ENCODE measurements at regions of chr14 and their contacts with region 1.

Region 1: DNA sequence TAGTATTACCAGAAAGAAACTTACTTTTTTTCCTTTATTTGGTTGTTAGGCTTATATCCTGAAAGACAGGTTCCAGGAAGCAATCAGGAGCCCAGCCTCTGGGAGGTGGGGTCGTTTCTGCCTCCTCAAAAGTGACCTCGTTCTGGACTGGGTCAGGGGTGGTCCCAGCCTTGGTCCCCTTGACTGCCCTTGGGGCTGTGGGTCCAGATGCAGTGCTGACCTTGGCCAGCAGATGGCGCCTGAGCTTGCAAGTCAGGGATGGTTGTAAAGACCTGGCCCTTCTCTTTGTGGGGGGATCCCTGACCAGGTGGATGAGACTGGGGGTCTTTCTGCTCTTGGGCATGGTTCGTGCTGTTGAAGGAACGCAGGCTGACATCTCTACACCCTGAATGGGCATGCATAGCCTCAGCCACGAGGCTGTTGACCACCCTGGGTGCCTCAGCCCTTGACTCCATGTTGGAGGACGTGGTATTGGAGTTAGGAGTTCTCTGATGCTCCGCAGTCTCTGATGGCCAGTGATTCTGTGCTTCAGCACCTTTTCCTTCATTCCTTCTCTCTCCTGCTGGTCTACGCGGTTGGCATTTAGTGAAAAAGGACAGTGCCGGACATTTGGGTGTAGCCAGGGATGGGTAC is 62.4 kb downstream of the ADCK1 start:
- DNase-seq: peak; percentile 66 to 79
- ATAC-seq: peak; percentile 68 to 94; a peak in 5 of 6 replicates
- H3K4me3 ChIP-seq: no peak overlapping the region
- H3K27ac ChIP-seq: no peak overlapping the region
- H3K4me1 ChIP-seq: no peaks in the 10 kb centered on the region
- CTCF ChIP-seq: peak; percentile 82
- EP300 ChIP-seq: no peak
- POLR2A ChIP-seq: no peak
- RAD21 ChIP-seq: peak; percentile 82 to 83

Region 2: GRCh38 chr14:77832297-77832696 is 30.0 kb before region 1 on chr14:
- CTCF ChIA-PET with region 1: interaction called, 17 read pairs
- POLR2A ChIA-PET with region 1: no interaction called
- DNase-seq: no peak
- ATAC-seq: no peak
- H3K4me3 ChIP-seq: no peak overlapping the region
- H3K27ac ChIP-seq: no peak overlapping the region
- H3K4me1 ChIP-seq: no peaks in the 10 kb centered on the region
- CTCF ChIP-seq: no peak
- EP300 ChIP-seq: no peak
- POLR2A ChIP-seq: no peak
- RAD21 ChIP-seq: no peak

Region 3: DNA sequence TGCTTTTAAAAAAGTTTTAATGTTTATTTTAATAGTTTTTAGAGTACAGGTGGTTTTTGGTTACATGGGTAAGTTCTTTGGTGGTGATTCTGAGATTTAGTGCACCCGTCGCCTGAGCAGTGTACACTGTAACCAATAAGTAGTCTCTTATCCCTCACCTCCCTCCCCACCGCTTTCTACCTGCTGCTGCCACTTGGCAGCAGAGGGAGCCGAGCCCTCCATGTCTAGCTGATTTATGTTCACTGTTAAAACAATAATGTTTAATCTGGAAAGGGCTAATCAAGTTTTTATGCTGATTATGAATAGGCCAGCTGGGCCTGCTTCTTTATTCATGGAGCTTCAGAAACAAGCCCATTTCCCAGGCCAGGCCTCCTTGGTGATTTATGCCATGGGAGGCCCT is 10.7 kb after region 1 on chr14:
- CTCF ChIA-PET with region 1: interaction called, 27 read pairs
- POLR2A ChIA-PET with region 1: no interaction called
- DNase-seq: no peak
- ATAC-seq: no peak
- H3K4me3 ChIP-seq: no peak overlapping the region
- H3K27ac ChIP-seq: no peak overlapping the region
- H3K4me1 ChIP-seq: no peaks in the 10 kb centered on the region
- CTCF ChIP-seq: no peak
- EP300 ChIP-seq: no peak
- POLR2A ChIP-seq: no peak
- RAD21 ChIP-seq: no peak

Region 4: DNA sequence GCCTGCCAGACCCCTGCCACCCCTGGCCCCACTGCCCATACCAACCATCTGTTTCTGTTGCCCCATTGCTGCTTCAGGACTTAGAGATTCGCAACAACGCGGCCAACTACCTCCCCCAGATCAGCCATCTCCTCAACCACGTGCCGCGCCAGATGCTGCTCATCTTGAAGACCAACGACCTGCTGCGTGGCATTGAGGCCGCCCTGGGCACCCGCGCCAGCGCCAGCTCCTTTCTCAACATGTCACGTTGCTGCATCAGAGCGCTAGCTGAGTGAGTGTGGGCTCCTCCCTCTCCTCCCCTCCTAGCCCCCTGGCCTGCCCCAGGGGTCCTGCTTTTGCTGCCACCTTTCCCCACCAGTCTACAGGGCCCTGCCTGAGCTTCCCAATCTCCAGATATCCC is 69.2 kb after region 1 on chr14:
- CTCF ChIA-PET with region 1: no interaction called
- POLR2A ChIA-PET with region 1: no interaction called
- DNase-seq: no peak
- ATAC-seq: no peak
- H3K4me3 ChIP-seq: no peak overlapping the region
- H3K27ac ChIP-seq: no peak overlapping the region
- H3K4me1 ChIP-seq: no peaks in the 10 kb centered on the region
- CTCF ChIP-seq: no peak
- EP300 ChIP-seq: no peak
- POLR2A ChIP-seq: no peak
- RAD21 ChIP-seq: no peak

Region 5: DNA sequence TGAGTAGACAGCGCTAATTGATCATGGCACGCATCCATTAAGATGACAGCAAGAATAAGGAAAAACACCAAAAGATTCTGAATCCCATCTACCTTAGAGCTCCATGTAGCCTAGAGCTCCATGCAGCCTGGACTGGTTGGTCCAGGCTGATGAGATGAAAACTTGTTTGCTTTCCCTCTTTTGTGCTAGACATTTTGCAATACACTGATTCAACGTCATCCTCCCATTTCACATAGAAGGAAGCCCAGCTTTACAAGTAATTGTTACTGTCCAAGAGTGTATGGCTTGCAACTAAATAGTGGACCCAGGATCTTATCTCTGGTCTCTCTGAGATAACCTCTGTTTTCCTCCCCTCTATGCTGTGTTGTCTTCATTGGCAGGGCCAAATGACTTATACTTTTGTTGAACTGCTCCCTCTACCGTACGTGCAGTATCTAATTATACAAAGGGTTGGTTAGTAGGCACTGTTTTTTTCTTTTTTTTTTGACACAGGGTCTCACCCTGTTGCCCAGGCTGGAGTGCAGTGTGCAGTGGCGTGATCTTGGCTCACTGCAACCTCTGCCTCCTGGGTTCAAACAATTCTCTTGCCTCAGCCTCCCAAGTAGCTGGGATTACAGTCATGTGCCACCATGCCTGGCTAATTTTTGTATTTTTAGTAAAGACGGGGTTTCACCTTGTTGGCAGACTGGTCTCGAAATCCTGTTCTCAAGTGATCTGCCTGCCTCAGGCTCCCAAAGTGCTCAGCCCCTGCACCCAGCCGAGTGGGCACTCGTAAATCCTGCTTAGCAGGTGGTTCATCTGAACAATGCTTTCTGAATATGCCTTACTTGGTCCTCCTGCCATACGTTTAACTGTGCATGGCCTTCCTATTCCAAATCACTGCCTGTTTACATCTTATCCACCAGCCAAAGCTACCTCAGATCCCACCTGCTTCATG is 99.6 kb after region 1 on chr14:
- CTCF ChIA-PET with region 1: no interaction called
- POLR2A ChIA-PET with region 1: no interaction called
- DNase-seq: peak in 1 of 2 experiments; percentile 29
- ATAC-seq: peak; percentile 37 to 53; a peak in 3 of 6 replicates
- H3K4me3 ChIP-seq: no peak overlapping the region
- H3K27ac ChIP-seq: no peak overlapping the region
- H3K4me1 ChIP-seq: no peaks in the 10 kb centered on the region
- CTCF ChIP-seq: no peak
- EP300 ChIP-seq: no peak
- POLR2A ChIP-seq: no peak
- RAD21 ChIP-seq: peak in 1 of 2 experiments; percentile 21; a peak in 1 of 5 replicates

Region 6: GRCh38 chr14:77980475-77981321 is 118.4 kb after region 1 on chr14:
- CTCF ChIA-PET with region 1: no interaction called
- POLR2A ChIA-PET with region 1: no interaction called
- DNase-seq: no peak
- ATAC-seq: peak; percentile 25 to 63; a peak in 4 of 6 replicates
- H3K4me3 ChIP-seq: peak overlapping the region; percentile 43
- H3K27ac ChIP-seq: peak overlapping the region in 1 of 2 experiments; percentile 71; a peak in 3 of 6 replicates
- H3K4me1 ChIP-seq: no peaks in the 10 kb centered on the region
- CTCF ChIP-seq: no peak
- EP300 ChIP-seq: no peak
- POLR2A ChIP-seq: no peak
- RAD21 ChIP-seq: no peak

Region 7: DNA sequence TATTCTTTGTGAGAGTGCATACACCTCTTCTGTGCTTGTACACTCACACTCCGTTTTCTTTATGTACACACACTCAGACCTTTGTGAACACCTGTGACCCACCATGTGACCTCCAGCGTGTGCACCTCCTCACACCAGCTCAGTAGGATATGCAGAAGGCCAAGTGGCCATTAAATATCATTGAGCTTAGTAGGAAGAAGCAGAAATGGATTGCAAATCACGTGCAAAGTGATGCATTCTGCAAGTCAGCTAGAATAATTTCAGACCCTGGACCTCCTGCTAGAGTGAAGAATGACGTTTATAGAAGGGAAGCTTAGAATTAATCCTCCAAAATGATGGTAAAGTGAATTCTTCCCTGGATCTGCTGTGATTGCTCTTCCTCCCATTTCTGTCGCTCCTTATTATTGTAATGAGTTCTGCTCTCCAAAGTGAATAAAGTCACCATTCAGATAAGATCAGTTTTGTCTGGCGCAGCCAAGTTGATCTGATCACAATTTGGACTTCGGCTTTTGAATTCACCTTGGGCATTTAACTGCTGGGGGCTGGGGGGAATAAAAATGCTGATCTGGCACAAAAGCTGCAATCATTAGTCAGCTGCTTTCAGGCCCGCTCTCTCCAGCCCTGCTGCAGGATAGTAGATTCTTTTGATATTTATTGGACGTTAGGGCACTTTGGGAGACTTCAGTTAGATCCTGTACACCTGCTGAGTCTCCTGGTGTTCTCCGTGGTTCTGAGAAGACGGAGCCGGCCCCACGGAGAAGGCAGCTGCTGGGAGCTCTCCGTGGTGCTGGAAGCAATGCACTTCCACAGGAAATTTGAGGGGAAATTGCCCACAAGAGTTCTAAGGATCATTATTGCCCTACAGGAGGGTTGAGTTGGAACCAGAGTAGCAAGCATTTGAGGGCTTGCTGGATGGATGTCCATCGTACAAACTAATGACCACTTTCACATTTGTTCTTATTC is 295.5 kb after region 1 on chr14:
- CTCF ChIA-PET with region 1: interaction called, 33 read pairs
- POLR2A ChIA-PET with region 1: no interaction called
- DNase-seq: no peak
- ATAC-seq: peak in 1 of 2 experiments; percentile 55; a peak in 1 of 6 replicates
- H3K4me3 ChIP-seq: no peak overlapping the region
- H3K27ac ChIP-seq: no peak overlapping the region
- H3K4me1 ChIP-seq: peaks cover 4% of the 10 kb centered on the region
- CTCF ChIP-seq: no peak
- EP300 ChIP-seq: no peak
- POLR2A ChIP-seq: no peak
- RAD21 ChIP-seq: no peak

Region 8: DNA sequence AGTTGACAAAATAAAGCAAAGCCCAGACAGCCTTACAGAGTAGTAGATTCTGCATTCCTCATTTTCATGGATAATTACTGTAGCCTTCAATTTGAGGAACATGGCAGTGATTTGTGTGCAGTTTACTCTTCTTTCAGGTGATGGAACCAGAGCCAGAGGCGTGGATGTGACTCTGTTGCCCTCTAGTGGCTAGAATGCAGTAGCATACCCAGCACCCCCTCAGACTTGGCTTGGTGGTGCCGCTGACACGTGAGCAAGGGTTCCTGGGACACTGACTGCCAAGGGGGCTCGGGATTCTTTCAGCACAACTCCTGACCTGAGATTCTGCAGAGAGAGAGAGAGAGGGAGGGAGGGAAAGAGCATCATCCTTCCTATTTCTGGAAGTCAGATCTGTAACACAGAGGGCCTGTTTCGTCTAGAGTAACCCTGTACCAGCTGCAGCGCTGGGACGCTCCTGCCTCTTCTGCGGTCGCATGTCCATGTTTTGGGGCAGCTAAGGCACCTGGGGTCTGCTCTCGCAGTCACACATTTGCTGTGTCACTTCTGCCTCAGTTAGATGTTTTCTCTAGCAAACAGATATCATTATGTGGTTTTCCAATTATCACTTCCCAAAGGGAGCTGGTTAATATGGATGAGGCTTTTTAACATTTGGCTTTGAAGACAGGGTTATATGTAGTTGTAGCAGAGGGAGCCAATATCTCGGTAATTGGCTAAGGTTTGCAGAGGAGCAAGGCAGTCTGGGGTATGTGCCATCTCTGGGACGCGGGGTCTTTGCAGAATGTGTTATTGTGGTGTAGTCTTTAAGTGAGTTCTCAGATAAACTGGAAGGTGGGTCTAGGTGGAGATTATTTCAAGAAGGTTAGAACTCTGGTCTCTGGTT is 736.0 kb after region 1 on chr14:
- CTCF ChIA-PET with region 1: interaction called, 13 read pairs
- POLR2A ChIA-PET with region 1: no interaction called
- DNase-seq: peak; percentile 50 to 68
- ATAC-seq: peak; percentile 97 to 99
- H3K4me3 ChIP-seq: no peak overlapping the region
- H3K27ac ChIP-seq: no peak overlapping the region
- H3K4me1 ChIP-seq: no peaks in the 10 kb centered on the region
- CTCF ChIP-seq: peak; percentile 79
- EP300 ChIP-seq: no peak
- POLR2A ChIP-seq: no peak
- RAD21 ChIP-seq: peak; percentile 72 to 81

Region 9: DNA sequence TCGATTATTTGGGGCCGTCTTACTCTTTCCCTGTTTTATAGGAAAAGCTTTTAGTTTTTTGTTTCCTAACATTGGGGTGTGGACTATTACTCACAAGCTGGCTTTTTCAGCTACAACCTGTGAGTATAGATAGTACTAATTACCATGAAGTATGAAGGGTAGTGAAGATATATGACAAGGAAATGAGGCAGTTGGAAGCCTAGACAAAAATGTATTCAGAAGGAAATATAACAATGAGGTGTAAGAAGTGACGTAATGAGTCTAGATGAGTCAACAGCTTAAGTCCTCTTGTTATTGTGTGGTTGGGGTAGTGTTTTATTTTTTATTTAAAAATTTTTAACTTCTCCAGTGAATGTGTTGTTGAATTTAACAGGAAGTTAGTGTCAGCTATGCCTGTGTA is 1112.4 kb after region 1 on chr14:
- CTCF ChIA-PET with region 1: no interaction called
- POLR2A ChIA-PET with region 1: no interaction called
- DNase-seq: no peak
- ATAC-seq: no peak
- H3K4me3 ChIP-seq: no peak overlapping the region
- H3K27ac ChIP-seq: no peak overlapping the region
- H3K4me1 ChIP-seq: no peaks in the 10 kb centered on the region
- CTCF ChIP-seq: no peak
- EP300 ChIP-seq: no peak
- POLR2A ChIP-seq: no peak
- RAD21 ChIP-seq: no peak